Activated naive CD4-positive, alpha-beta T cell treated with anti-CD3 and anti-CD28 coated beads for 36 hours (primary cell): ENCODE measurements at regions of chr12 and their contacts with region 1.

Region 1: GRCh38 chr12:76020731-76021672 is 10.6 kb downstream of the PHLDA1 start:
- DNase-seq: peak; percentile 91
- H3K4me3 Mint-ChIP-seq: peak overlapping the region; percentile 40
- H3K27ac Mint-ChIP-seq: peak overlapping the region; percentile 95
- H3K4me1 Mint-ChIP-seq: peaks cover 45% of the 10 kb centered on the region
- H3K27me3 Mint-ChIP-seq: no peaks in the 10 kb centered on the region

Region 2: GRCh38 chr12:75658901-75659383 is 362.1 kb before region 1 on chr12:
- CTCF ChIA-PET with region 1: no interaction called
- intact Hi-C with region 1: loop called (anchors 2 kb)
- DNase-seq: peak; percentile 16
- H3K4me3 Mint-ChIP-seq: no peak overlapping the region
- H3K27ac Mint-ChIP-seq: no peak overlapping the region
- H3K4me1 Mint-ChIP-seq: peaks cover 9% of the 10 kb centered on the region
- H3K27me3 Mint-ChIP-seq: peaks cover 2% of the 10 kb centered on the region

Region 3: DNA sequence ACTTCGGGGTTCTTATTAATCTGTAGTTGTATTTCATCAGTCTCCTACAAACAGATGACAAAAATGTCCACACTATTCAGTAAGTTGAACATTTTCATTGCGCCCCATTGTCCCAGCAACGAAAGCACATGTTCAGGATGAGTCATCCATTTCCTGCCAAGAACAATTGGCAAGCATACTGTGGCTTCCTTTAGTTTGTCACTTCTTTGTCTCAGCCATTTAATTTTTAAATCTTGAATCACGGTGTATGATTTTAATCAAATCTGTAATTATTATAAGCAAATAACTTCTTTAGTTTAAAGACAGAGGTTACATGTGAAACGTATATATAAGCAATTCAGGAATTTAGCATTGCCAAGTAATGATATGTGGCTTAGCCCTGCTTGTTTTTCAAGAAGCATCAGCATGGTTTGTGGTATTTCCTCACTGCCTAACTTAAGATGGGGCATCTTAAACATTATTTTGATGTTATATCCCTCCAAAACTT is 298.2 kb before region 1 on chr12:
- CTCF ChIA-PET with region 1: no interaction called
- intact Hi-C with region 1: loop called (anchors 1 kb)
- DNase-seq: peak; percentile 64
- H3K4me3 Mint-ChIP-seq: no peak overlapping the region
- H3K27ac Mint-ChIP-seq: peak overlapping the region; percentile 18
- H3K4me1 Mint-ChIP-seq: peaks cover 15% of the 10 kb centered on the region
- H3K27me3 Mint-ChIP-seq: peaks cover 6% of the 10 kb centered on the region

Region 4: GRCh38 chr12:75790219-75790618 is 230.8 kb before region 1 on chr12:
- CTCF ChIA-PET with region 1: no interaction called
- intact Hi-C with region 1: loop called (anchors 1 kb)
- DNase-seq: no peak
- H3K4me3 Mint-ChIP-seq: no peak overlapping the region
- H3K27ac Mint-ChIP-seq: no peak overlapping the region
- H3K4me1 Mint-ChIP-seq: peaks cover 22% of the 10 kb centered on the region
- H3K27me3 Mint-ChIP-seq: peaks cover 10% of the 10 kb centered on the region

Region 5: DNA sequence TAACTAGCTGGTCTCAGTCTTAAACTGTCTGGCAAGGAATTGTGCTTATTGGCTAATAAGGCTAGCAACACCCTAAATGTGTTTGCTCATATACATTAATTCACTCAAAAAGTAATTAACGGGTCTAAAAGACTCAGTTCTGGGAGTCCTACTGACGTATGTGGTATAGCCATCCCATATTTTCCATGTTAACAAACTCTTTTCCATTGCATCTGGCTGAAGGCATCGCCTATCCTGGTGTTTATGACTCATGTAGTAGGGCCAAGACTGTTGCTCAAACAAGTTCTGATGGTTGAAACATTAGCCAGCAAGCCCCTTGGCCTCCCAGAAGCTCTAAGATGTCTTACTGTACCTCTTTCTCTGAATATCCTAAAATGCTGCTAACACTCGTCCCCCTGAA is 87.9 kb before region 1 on chr12:
- CTCF ChIA-PET with region 1: interaction called, 3 read pairs
- intact Hi-C with region 1: loop called (anchors 1 kb)
- DNase-seq: no peak
- H3K4me3 Mint-ChIP-seq: no peak overlapping the region
- H3K27ac Mint-ChIP-seq: no peak overlapping the region
- H3K4me1 Mint-ChIP-seq: peaks cover 18% of the 10 kb centered on the region
- H3K27me3 Mint-ChIP-seq: peaks cover 15% of the 10 kb centered on the region

Region 6: GRCh38 chr12:75944097-75944904 is 76.7 kb before region 1 on chr12:
- CTCF ChIA-PET with region 1: no interaction called
- intact Hi-C with region 1: loop called (anchors 1 kb)
- DNase-seq: peak; percentile 44
- H3K4me3 Mint-ChIP-seq: no peak overlapping the region
- H3K27ac Mint-ChIP-seq: peak overlapping the region; percentile 87
- H3K4me1 Mint-ChIP-seq: peaks cover 22% of the 10 kb centered on the region
- H3K27me3 Mint-ChIP-seq: no peaks in the 10 kb centered on the region

Region 7: DNA sequence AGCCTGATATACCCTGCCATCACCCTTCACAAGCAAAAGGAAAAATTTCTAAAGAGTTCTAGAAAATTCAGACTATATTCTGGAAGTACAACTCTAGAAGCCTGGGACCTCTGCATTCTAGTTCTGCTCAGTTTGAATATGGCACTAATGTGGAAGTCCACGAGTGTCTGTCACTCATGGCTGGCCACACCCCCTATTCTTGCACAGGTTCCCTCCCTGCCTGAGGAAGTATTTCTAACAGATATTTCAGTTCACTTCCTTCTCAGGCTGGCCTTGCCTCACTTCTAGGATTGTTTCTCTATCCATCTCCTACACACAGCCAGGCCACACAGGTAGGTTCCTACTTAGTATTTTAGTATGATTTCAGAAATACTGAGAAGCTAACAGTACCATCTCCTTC is 56.9 kb before region 1 on chr12:
- CTCF ChIA-PET with region 1: no interaction called
- intact Hi-C with region 1: no loop called
- DNase-seq: no peak
- H3K4me3 Mint-ChIP-seq: no peak overlapping the region
- H3K27ac Mint-ChIP-seq: no peak overlapping the region
- H3K4me1 Mint-ChIP-seq: peaks cover 16% of the 10 kb centered on the region
- H3K27me3 Mint-ChIP-seq: peaks cover under 1% of the 10 kb centered on the region

Region 8: DNA sequence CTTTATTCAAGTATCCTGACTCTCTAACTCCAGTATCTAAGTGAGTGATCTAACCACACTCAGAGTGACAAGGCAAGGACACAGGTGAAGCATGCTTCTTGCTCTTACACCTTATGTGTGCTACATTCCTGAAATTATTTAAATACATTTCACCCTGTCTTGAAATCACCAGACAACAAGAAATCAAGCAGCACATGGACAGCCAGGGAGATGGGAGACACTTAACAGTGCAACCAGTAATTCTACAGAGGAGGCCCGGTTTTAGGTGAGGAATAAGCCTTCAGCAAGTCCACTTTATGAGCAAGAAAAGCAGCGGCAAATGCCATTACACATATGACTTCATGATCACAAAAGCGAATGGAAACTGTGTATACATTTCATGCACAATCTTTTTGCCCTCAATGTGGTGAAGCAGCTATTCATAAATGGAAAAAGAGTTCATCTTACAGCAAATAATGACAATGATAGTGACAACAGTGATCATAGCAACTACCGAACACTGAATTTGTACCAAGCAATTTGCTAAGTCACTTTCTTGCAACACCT is 26.7 kb before region 1 on chr12:
- CTCF ChIA-PET with region 1: interaction called, 3 read pairs
- intact Hi-C with region 1: loop called (anchors 1 kb)
- DNase-seq: no peak
- H3K4me3 Mint-ChIP-seq: no peak overlapping the region
- H3K27ac Mint-ChIP-seq: no peak overlapping the region
- H3K4me1 Mint-ChIP-seq: peaks cover 17% of the 10 kb centered on the region
- H3K27me3 Mint-ChIP-seq: no peaks in the 10 kb centered on the region